AG04449 (cell line): ENCODE measurements at regions of chr15 and their contacts with region 1.

Region 1: DNA sequence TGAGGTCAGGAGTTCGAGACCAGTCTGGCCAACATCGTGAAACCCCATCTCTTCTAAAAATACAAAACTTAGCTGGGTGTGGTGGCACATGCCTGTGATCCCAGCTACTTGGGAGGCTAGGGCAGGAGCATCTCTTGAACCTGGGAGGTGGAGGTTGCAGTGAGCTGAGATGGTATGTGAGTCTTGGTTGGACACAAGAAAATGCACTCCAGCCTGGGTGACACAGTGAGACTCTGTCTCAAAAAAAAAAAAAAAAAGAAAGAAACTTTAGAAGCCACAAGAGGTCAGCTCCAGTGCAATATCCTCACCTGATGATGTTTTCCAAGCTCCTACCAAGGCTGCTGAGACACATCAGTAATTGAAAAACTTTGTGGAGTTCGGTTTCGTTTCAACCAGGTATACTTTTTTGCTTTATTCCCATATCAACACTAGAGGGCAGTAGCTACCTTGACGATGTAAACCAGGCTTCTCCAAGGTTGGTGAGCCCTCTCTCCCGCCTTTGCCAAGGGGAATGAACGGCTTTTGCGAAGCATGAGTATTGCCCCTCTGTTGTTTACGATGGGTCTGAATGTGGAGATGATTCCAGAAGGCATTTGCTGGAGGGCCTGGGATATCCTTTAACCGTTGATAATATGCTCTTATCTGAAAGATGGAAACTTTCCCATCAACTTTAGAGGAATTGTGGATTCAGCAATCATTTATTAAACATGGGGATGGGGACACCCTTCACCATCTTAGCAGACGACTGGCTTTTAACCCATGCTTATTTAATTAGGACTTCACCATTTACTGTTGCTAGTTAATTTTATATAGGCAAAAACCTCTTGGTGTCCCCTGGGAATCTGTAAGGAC is 202.8 kb downstream of the SV2B start:
- DNase-seq: peak; percentile 9
- H3K4me3 ChIP-seq: no peak overlapping the region
- CTCF ChIP-seq: peak; percentile 60

Region 2: GRCh38 chr15:91055548-91056331 is 247.1 kb before region 1 on chr15:
- CTCF ChIA-PET with region 1: no interaction called
- POLR2A ChIA-PET with region 1: no interaction called
- DNase-seq: no peak
- H3K4me3 ChIP-seq: no peak overlapping the region
- CTCF ChIP-seq: peak; percentile 80

Region 3: DNA sequence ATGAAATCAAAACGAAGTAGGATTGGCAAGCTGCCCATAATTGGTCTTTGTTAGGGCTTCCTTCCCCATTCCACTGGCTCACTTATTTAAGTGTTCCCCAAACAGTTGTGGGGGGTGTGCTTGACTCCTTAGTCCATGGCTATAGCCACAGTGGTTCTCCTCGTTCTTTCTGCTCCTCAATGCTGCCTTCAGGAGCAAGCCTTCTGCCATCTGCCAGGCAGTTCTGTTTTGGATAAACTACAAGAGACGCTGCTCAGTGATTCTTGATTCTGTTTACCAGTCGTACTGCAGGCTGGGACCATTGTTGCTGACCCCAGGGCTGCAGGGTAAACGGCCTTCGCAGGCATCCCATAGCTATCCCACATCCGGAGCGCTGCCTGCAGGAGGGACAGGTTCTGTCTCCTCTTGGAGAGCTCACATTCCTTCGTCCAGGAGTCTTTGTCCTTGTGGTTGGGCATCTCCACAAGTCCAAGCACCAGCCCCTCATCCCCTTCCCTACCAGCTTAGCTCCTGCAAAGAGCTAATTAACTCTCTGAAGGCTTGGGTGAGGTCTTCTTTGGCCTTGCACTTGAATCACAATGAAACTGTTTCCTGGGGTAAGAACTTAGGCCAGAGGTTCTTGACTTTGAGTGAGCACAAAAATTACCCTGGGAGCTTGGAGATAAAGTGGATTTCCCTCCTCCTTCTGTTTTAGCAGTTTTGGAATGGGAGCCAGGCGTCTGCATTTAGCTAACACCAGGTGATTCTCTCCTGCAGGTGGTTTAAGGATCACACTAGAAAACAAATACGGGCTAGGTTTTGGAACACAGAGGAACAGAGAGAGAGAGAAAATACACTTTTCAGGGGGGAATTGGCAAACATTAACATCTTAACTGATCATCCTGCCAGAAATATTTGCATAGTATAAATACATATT is 87.9 kb before region 1 on chr15:
- CTCF ChIA-PET with region 1: no interaction called
- POLR2A ChIA-PET with region 1: no interaction called
- DNase-seq: no peak
- H3K4me3 ChIP-seq: no peak overlapping the region
- CTCF ChIP-seq: no peak

Region 4: DNA sequence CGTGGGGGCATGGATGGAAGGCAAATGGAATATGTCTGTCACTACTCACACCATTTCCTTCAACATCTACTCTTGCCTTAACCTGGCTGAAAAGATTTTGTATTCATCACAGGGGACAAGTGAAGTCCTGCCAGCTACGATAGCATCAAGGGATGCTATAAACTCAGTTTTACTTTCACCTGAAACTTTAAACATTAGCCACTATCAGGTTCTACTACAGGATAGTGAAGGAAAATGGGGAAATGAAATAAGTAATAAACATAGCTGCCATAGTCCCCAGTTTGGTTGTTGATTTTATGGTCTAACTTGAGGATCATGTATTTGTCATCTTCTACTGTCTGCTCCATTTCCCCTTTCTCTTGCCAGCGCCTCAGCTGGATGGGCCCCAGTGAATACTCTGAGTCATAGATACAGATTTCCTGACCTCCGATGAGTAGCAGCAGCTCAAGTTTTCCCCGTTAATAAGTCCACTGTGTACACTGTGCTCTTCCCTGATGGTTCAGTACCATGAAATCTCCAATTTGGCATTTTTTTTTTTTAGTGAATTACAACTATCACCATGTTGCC is 212.5 kb after region 1 on chr15:
- CTCF ChIA-PET with region 1: interaction called, 27 read pairs
- POLR2A ChIA-PET with region 1: no interaction called
- DNase-seq: peak; percentile 60
- H3K4me3 ChIP-seq: no peak overlapping the region
- CTCF ChIP-seq: no peak

Region 5: GRCh38 chr15:91522663-91523332 is 220.0 kb after region 1 on chr15:
- CTCF ChIA-PET with region 1: interaction called, 27 read pairs
- POLR2A ChIA-PET with region 1: no interaction called
- DNase-seq: no peak
- H3K4me3 ChIP-seq: no peak overlapping the region
- CTCF ChIP-seq: peak; percentile 44

Region 6: GRCh38 chr15:91535856-91536500 is 233.2 kb after region 1 on chr15:
- CTCF ChIA-PET with region 1: interaction called, 15 read pairs
- POLR2A ChIA-PET with region 1: no interaction called
- DNase-seq: no peak
- H3K4me3 ChIP-seq: no peak overlapping the region
- CTCF ChIP-seq: no peak

Region 7: GRCh38 chr15:92077353-92078085 is 774.7 kb after region 1 on chr15:
- CTCF ChIA-PET with region 1: interaction called, 62 read pairs
- POLR2A ChIA-PET with region 1: no interaction called
- DNase-seq: no peak
- H3K4me3 ChIP-seq: no peak overlapping the region
- CTCF ChIP-seq: peak; percentile 82